ENCODE measurements at regions of chr20 and their contacts with region 1.

Region 1: DNA sequence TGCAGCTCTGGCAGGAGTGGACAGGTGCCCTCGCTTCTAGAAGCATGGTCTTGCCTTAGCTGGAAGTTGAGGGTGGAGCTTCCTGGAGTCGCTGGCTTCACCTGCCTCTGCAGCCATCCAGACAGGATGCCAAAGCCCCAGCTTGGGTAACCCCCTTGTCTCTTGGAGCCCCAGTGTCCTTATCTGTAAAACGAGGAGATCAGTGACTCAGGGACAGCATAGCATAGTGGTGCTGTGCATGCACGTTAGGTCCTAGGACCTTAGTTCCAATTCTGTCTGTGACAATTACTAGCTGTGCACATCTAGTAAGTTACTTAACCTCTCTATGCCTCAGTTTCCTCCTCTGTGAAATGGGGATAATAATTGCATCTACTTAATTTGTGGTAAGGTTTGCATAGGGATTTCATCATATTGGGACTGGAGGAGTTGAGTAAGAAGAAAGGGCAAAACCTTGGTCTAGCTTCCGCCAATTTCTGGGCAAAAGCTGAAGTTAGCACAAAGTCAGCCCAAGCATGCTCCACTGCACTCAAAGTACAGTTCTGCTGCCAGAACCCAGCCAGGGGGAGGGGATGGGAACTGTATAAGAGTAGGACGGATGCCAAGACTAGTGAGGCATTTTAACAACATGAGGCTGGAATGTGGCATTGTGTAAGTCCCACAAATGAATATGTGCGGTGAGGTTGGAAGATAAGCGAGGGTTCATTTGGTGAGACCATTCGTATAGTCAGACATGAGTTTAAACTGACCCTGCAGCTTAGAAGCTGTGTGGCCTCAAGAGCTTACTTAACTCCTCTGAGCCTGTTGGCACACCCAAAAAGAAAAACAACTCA is 24.5 kb downstream of the TOX2 start:
- DNase-seq: peak; percentile 56 to 89
- H3K4me3 ChIP-seq: no peak overlapping the region
- H3K27ac ChIP-seq: no peak overlapping the region
- H3K4me1 ChIP-seq: peaks cover 14 to 25% of the 10 kb centered on the region in 2 donors
- H3K27me3 ChIP-seq: no peaks in the 10 kb centered on the region
- CTCF ChIP-seq: no peak

Region 2: DNA sequence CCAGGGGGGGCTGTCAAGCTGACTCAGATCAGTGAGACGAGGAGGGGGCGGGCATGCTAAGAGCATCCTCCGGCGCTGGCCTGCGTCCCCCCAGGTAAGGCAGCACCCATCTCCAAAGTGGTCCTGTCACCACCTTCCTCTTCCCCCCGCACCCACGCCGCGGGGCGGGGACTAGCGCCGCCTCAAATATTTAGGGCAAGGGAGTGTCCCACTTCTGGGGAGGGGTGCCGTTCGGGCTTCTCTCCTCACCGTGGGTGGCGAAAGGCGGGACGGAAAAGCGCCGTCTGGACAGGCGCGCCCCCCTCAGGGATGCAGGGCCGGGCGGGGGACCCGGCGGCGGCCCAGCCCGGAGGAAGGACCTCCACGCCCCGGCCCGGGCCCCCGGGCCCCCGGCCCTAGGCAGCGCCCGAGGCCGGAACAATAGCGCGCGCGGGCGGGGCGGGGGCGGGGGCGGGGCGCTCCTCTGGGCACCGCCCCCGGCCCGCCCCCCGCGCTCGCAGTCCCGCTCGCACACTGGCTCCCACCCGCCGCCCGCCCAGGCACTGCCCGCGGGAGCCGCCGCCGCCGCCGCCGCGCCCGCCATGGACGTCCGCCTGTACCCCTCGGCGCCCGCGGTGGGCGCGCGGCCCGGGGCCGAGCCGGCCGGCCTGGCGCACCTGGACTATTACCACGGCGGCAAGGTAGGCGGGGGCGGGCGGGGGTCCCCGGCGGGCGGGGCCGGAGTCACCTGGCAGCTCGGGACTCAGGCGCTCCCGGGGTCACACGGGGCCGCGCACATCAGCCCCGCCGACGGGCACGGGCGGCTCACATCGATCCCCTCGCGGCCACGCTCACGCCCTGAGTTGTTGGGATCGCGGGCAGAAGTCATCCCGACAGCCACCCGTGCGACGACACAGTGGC is 24.6 kb before region 1 on chr20 and contains the start of gene TOX2:
- intact Hi-C with region 1: loop called (anchors 1 kb)
- DNase-seq: peak in 1 of 2 donors; percentile 74
- H3K4me3 ChIP-seq: peak within 1 kb of the TSS; percentile 55 to 71
- H3K27ac ChIP-seq: peak within 1 kb of the TSS in 1 of 2 donors; percentile 58
- H3K4me1 ChIP-seq: no peaks in the 10 kb centered on the region
- H3K27me3 ChIP-seq: no peaks in the 10 kb centered on the region
- CTCF ChIP-seq: no peak
- total RNA-seq, gene TOX2: 47.0 TPM

Region 3: GRCh38 chr20:43955062-43955749 is 16.1 kb after region 1 on chr20:
- intact Hi-C with region 1: loop called (anchors 1 kb)
- DNase-seq: no peak
- H3K4me3 ChIP-seq: no peak overlapping the region
- H3K27ac ChIP-seq: peak overlapping the region; percentile 48 to 62
- H3K4me1 ChIP-seq: peaks cover 9 to 24% of the 10 kb centered on the region in 2 donors
- H3K27me3 ChIP-seq: no peaks in the 10 kb centered on the region
- CTCF ChIP-seq: no peak

Region 4: DNA sequence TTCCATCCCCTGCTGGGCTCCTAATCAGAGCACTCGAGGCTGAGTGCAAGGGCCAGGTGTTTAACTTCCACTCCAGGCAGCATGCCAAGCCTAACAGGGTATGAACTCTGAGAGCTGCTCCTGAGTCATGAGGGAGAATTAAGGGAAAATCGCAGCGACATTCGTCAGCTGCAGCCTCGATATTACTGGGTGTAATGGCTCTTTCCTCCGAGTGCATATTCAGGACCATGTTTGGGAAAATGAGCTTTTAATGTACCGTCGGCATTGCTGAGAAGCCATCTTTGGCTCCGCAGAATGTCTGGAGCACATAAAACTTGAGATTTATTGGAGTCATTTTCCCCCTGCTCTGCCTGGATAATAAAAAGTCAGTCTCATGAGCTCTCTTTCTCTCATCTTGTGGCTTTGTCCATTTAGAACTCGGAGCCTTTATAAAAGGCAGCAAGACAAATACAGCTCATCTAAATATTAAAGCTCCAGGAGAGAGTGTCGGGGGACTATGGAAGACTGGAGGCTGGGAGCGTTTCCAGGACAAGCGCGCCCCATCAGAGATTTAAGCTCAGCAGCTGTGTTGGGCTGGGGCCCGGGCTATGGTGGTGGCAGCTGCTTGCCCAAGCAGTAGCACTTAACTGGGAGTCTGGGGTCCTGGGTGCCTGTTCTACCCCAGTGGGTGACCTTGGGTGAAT is 79.3 kb after region 1 on chr20:
- intact Hi-C with region 1: loop called (anchors 5 kb)
- DNase-seq: peak; percentile 31 to 83
- H3K4me3 ChIP-seq: peak overlapping the region in 1 of 2 donors; percentile 47
- H3K27ac ChIP-seq: peak overlapping the region; percentile 65 to 70
- H3K4me1 ChIP-seq: peaks cover 11 to 20% of the 10 kb centered on the region in 2 donors
- H3K27me3 ChIP-seq: no peaks in the 10 kb centered on the region
- CTCF ChIP-seq: no peak

Measured in ascending aorta (tissue), 2 donors.